ENCODE measurements at regions of chr5 and their contacts with region 1.

Region 1: DNA sequence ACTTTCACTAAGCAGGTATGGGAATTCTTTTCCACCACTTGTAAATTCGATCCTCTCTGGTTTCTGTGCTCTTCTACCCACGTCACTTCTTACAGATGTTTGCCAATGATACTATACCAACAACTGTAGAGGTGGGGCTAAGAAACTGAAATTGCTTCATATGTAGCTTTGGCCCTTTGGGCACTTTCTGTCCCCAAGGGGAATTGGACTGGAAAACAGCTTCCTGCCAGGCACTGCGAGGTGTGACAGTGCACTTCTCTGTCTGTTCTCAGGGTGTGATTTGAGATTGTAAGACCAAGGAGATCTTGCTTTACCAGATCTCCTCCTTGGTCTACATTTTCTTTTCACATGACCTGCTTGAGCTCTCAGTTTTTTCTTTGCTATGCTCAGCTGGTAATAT is 164.2 kb downstream of the CCDC192 start:
- DNase-seq: no peak
- H3K4me3 ChIP-seq: no peak overlapping the region
- H3K27ac ChIP-seq: no peak overlapping the region
- H3K4me1 ChIP-seq: no peaks in the 10 kb centered on the region
- H3K27me3 ChIP-seq: no peaks in the 10 kb centered on the region
- CTCF ChIP-seq: no peak
- EP300 ChIP-seq: no peak
- POLR2A ChIP-seq: no peak
- RAD21 ChIP-seq: no peak

Region 2: DNA sequence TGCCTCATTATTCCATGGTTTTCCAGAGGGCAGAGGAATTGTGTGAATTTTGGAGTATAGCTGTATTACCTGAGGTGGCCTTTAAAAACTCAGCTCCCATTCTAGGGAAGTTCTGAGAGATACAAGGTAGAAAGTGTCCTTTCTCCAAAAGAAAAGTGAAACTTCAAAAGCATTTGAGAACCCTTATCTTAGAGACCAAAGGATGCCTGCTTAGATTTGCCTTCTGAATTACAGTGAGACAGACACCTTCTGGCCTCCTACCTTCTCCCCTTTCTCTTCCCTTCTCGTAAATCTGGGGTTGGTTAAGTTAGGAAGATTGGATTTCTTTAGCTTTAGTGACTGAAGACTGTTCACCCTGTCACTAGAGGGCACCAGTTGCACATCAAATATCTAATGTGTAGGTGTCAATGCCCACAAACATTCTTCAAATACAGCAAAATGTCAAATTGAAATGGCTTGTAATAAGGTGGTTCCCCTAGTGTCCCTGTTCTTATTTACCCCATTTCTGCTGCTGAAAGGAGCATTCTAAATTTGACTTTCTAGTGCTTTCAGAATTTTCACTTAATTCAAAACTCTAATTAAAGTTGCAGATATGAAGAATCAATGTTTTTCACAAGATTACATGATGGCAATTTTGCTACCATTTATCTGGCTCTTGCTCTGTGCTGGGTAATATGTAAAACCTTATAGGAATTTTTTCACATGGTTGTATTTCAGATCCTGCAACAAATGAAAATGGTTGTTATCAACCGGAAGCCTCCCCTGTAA is 303.2 kb before region 1 on chr5:
- CTCF ChIA-PET with region 1: interaction called, 13 read pairs
- POLR2A ChIA-PET with region 1: no interaction called
- DNase-seq: no peak
- H3K4me3 ChIP-seq: no peak overlapping the region
- H3K27ac ChIP-seq: no peak overlapping the region
- H3K4me1 ChIP-seq: peaks cover 0 to 2% (median 0%) of the 10 kb centered on the region in 4 experiments; a peak in 1 of 7 replicates
- H3K27me3 ChIP-seq: no peaks in the 10 kb centered on the region
- CTCF ChIP-seq: peak in 2 of 3 experiments; percentile 67 to 78; a peak in 3 of 4 replicates
- EP300 ChIP-seq: no peak
- POLR2A ChIP-seq: no peak
- RAD21 ChIP-seq: peak; percentile 93 to 94

Region 3: GRCh38 chr5:127849891-127850290 is 17.5 kb before region 1 on chr5:
- CTCF ChIA-PET with region 1: interaction called, 11 read pairs
- POLR2A ChIA-PET with region 1: no interaction called
- DNase-seq: no peak
- H3K4me3 ChIP-seq: no peak overlapping the region
- H3K27ac ChIP-seq: no peak overlapping the region
- H3K4me1 ChIP-seq: no peaks in the 10 kb centered on the region; a peak in 1 of 7 replicates
- H3K27me3 ChIP-seq: no peaks in the 10 kb centered on the region
- CTCF ChIP-seq: no peak
- EP300 ChIP-seq: no peak
- POLR2A ChIP-seq: no peak
- RAD21 ChIP-seq: no peak

Region 4: DNA sequence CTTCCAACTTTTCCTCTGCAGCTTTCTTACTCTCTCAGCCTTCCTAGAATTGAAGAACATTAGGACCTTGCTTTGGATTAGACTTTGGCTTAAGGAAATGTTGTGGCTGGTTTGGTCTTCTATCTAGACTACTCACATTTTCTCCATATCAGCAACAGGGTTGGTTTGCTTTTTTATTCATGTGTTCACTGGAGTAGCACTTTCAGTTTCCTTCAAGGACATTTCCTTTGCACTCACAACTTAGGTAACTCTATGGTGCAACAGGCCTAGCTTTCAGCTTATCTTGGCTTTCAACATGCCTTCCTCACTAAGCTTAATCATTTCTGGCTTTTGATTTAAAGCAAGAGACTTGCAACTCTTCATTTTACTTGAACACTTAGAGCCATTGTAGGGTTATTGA is 11.1 kb before region 1 on chr5:
- CTCF ChIA-PET with region 1: interaction called, 16 read pairs
- POLR2A ChIA-PET with region 1: no interaction called
- DNase-seq: no peak
- H3K4me3 ChIP-seq: no peak overlapping the region
- H3K27ac ChIP-seq: no peak overlapping the region
- H3K4me1 ChIP-seq: no peaks in the 10 kb centered on the region
- H3K27me3 ChIP-seq: no peaks in the 10 kb centered on the region
- CTCF ChIP-seq: no peak
- EP300 ChIP-seq: no peak
- POLR2A ChIP-seq: no peak
- RAD21 ChIP-seq: no peak

Region 5: DNA sequence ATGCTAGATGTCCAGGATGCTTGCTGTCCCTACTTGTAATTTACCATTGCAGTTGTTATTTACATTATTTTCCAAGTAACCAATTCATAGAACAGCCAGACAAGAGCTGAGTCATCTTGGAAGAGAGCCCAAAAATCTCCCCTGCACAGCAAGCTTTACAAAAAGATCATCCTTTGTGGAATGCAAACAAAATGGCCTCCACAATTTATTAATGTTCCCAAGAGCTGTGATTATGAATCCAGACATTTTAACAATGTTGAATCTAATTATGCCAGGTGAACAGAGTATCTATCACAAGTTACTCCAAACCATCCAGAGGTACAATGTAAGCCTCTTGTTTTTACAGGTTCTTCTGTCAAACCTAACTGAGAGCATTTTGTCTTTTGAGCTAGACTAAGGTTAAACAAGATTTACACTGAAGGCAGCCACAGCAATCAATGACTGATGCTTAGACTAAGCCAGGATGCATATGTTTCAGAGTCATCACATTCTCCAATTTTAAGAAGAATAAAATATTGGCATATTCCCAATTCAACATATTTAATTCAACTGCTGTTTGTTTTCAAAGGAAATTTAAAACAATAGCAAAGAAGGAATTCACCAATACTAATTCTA is 120.9 kb after region 1 on chr5:
- CTCF ChIA-PET with region 1: no interaction called
- POLR2A ChIA-PET with region 1: no interaction called
- DNase-seq: no peak
- H3K4me3 ChIP-seq: no peak overlapping the region
- H3K27ac ChIP-seq: no peak overlapping the region
- H3K4me1 ChIP-seq: no peaks in the 10 kb centered on the region
- H3K27me3 ChIP-seq: no peaks in the 10 kb centered on the region
- CTCF ChIP-seq: no peak
- EP300 ChIP-seq: no peak
- POLR2A ChIP-seq: no peak
- RAD21 ChIP-seq: no peak

Measured in H1 (cell line).